Activated T-helper 2 cell treated with anti-CD3 and anti-CD28 coated beads, Interferon-gamma antibody, Interleukin-2, Interleukin-4, amounts not matched to agents 10 μg/mL and 5 μg/mL and 100 μg/mL, durations not matched to agents 14 hours and 24 hours and 36 hours (primary cell): ENCODE measurements at regions of chr11 and their contacts with region 1.

Region 1: DNA sequence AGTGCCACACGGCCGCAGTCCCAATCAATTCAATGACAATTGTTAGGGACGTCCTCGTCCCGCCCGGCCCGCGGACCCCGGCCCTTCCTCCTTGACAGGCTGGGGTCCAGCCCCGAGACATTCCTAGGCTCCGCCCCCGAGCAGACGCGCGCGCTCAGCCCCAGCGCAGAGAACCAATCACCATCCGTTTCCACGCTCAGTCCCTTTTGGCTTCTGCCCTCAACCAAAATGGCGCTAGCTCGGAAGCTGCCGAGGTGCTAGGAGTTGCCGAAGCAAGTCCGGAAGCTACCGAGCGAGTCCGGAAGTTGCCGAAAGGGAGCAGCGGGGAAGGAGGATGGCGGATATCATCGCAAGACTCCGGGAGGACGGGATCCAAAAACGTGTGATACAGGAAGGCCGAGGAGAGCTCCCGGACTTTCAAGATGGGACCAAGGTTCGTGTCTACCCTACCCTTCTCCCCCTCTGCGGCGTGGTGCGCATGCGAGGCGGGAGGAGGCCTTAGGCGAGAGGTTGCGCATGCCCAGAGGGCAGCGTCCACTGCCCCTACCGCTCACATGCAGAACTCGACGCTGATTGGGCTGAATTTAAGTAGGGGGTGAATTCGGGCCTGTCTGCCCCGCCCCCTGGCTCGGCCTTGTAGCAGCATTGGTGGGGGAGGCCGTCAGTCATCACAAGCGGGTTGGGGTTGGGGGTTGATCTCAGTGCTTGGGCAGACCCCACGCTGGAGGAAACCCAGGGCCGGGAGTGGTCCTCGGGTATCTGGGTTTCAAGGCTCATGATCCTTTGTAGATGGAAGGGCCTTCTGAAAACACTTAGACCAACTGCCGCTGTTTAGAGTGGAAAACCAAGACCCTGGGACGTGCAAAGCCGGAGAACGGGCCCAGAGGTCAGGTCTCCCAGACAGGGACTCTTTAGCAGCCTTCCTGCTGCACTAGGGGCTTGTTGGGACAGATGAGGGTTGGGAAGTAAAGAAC is at the start of gene AIP:
- DNase-seq: peak; percentile 98
- H3K4me3 Mint-ChIP-seq: peak within 1 kb of the TSS; percentile 83
- H3K27ac Mint-ChIP-seq: peak within 1 kb of the TSS; percentile 99
- H3K4me1 Mint-ChIP-seq: peaks cover 42% of the 10 kb centered on the region
- H3K27me3 Mint-ChIP-seq: no peaks in the 10 kb centered on the region
- total RNA-seq, gene AIP: 190 and 191 TPM in 2 replicates

Region 2: DNA sequence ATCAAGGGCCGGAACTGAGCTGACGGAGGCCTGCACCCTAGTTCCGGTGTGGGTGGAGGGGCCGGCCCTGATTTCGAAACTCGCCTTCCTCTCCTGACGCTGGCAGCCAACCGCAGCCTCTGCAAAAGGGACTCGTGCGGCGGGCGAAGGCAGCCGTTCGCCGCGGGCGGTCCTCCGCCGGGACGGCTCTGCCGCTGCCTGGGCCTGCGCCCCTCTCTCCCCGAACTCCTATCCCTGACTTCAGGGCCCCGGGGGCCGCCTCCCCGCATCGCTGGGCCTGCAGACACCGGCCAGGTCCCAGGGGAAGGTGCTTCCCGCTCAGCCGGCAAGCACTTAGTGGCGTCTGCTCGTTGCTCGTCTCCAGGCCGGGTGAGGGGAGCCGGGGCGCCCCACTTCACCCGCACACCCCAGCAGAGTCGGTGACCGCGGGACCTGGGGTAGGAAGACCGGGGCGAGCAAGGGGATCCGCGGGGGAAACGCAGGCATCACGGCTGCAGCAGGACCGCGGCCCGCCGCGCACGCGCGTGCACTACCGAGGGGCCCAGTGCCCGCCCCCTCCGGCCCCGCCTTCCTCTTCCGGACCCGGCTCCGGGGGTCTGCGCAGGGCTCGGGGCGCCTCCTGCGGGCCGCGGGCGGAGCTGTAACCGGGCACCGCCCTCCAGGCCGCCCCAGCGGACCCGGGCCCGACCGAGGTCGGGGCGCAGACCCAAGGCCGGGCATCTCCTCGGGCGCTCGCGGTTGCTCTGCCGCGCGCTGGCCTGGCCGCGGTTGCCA is 194.5 kb before region 1 on chr11:
- intact Hi-C with region 1: loop called (anchors 5 kb)
- DNase-seq: peak; percentile 89
- H3K4me3 Mint-ChIP-seq: peak overlapping the region; percentile 81
- H3K27ac Mint-ChIP-seq: peak overlapping the region; percentile 96
- H3K4me1 Mint-ChIP-seq: peaks cover 44% of the 10 kb centered on the region
- H3K27me3 Mint-ChIP-seq: no peaks in the 10 kb centered on the region

Region 3: DNA sequence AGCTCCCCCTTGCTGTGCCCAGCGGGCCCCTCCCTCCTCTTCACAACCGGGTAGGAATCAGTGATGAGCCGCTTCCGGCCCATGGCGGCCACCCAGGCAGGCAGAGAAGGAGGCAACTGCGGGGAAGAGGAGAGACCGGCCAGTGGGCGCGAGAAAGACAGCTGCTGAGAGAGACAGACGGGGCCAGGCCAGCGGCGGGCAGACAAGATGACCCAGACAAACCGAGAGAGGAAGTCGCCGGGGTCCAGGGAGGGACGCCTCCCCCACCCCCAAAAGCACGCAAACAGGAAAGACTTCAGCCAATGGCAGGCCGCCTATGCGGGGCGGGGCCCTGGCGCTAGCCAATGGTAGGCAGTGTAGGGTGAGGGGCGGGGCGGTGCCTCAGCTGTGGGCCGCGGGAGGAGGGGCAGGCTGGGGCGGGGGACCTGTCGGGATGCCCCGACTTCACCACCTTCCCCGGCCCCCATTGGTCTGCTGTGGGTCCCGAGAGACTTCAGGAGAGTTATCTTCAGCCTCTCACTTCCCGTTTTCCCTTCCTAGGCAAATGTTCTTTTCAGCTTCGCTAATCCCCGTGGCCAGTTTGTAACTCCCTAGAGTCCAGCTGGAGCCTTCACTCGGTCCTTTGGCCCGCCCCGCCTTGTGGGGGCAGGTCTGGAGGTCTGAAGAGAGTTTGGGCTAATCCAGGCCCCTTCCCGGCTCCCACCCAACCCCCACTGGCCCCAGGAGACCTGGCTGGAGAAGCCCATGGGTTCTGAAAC is 129.6 kb before region 1 on chr11 and contains the start of gene POLD4:
- intact Hi-C with region 1: loop called (anchors 5 kb)
- DNase-seq: peak; percentile 94
- H3K4me3 Mint-ChIP-seq: peak within 1 kb of the TSS; percentile 96
- H3K27ac Mint-ChIP-seq: peak within 1 kb of the TSS; percentile 100
- H3K4me1 Mint-ChIP-seq: peaks cover 35% of the 10 kb centered on the region
- H3K27me3 Mint-ChIP-seq: peaks cover 8% of the 10 kb centered on the region
- total RNA-seq, gene POLD4: 41.1 and 50.1 TPM in 2 replicates

Region 4: DNA sequence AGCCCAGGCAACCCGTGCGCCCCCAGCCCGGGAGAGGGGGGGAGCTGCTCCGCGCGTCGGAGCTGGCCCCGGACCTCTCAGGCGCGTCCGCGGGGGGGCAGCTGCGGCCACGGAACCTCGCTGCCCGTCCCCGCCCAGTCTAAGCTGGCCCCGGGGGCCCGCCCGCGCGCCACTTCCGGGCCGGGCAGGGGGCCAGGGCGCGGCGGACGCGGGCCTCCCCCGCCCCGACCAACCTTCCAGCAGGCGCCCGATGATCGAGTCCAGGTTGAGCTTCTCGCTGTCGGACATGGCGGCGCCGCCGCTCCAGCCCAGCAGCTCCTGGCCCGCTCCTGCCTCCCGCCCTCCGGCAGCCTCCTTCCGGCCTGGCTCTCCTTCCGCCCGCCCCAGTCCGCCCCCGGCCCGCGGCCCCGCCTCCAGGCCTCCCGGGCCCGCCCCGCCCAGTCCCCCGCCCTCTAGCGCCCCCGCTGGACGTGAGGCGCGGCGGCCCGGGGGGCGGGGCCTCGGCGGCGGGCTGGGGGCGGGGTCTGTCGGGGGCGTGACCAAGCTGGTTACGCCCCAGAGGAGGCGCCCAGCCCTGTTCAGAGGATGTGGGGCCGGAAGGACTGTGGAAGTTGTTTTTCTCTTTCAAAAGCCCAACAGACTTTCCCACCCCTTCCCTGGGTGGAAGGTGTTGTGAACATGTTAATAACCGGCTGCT is 81.5 kb before region 1 on chr11 and contains the start of gene PPP1CA:
- intact Hi-C with region 1: loop called (anchors 2 kb)
- DNase-seq: peak; percentile 86
- H3K4me3 Mint-ChIP-seq: peak within 1 kb of the TSS; percentile 97
- H3K27ac Mint-ChIP-seq: peak within 1 kb of the TSS; percentile 83
- H3K4me1 Mint-ChIP-seq: peaks cover 40% of the 10 kb centered on the region
- H3K27me3 Mint-ChIP-seq: no peaks in the 10 kb centered on the region
- total RNA-seq, gene PPP1CA: 250 and 262 TPM in 2 replicates

Region 5: GRCh38 chr11:67420646-67421420 is 62.3 kb before region 1 on chr11:
- intact Hi-C with region 1: no loop called
- DNase-seq: peak; percentile 94
- H3K4me3 Mint-ChIP-seq: peak overlapping the region; percentile 67
- H3K27ac Mint-ChIP-seq: no peak overlapping the region
- H3K4me1 Mint-ChIP-seq: peaks cover 24% of the 10 kb centered on the region
- H3K27me3 Mint-ChIP-seq: peaks cover 10% of the 10 kb centered on the region

Region 6: GRCh38 chr11:67439321-67439883 is 43.7 kb before region 1 on chr11:
- intact Hi-C with region 1: loop called (anchors 2 kb)
- DNase-seq: no peak
- H3K4me3 Mint-ChIP-seq: peak overlapping the region; percentile 94
- H3K27ac Mint-ChIP-seq: peak overlapping the region; percentile 95
- H3K4me1 Mint-ChIP-seq: peaks cover 37% of the 10 kb centered on the region
- H3K27me3 Mint-ChIP-seq: no peaks in the 10 kb centered on the region

Region 7: GRCh38 chr11:67468835-67469811 is 14.0 kb before region 1 on chr11 and contains the start of gene TMEM134:
- intact Hi-C with region 1: loop called (anchors 1 kb)
- DNase-seq: peak; percentile 86
- H3K4me3 Mint-ChIP-seq: peak within 1 kb of the TSS; percentile 92
- H3K27ac Mint-ChIP-seq: peak within 1 kb of the TSS; percentile 68
- H3K4me1 Mint-ChIP-seq: peaks cover 25% of the 10 kb centered on the region
- H3K27me3 Mint-ChIP-seq: no peaks in the 10 kb centered on the region
- total RNA-seq, gene TMEM134: 58.5 and 62.0 TPM in 2 replicates

Region 8: DNA sequence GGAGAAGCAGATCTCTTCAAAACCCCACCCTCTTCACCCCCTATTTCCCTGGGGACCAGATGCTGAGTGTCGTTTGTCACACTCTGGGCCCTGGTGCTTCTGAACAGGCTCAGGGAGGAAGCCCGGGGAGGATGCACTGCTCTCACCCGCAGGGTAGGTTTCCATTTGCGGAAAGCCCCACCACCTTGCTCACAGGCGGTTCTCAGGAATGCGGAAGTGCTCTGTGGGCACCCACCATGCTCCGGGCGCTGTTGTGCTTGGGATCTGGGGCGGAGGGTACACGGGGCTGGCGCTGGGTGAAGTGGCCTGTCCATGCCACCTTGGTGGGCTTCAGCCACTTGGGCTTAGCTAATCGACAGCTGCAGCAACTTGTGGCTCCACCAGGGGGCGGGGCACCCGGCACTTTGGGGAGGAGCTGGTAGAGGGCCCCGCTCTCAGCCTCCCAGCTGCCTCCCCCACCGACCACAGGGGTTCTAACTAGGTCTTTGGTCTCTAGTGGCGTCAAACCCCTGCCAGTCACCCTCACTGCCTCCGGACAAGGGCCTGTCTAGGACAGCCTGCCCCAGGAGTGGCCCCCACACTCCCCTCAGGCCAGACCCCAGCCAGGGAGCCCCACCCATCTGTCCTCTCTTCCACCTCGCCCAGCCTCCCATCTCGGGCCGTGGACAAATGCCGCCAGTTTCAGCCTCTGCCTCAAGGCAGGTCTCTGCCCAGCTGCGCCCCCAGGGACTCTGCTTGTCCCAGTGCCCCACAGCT is 131.0 kb after region 1 on chr11:
- intact Hi-C with region 1: loop called (anchors 10 kb)
- DNase-seq: peak; percentile 81
- H3K4me3 Mint-ChIP-seq: peak overlapping the region; percentile 74
- H3K27ac Mint-ChIP-seq: peak overlapping the region; percentile 98
- H3K4me1 Mint-ChIP-seq: peaks cover 22% of the 10 kb centered on the region
- H3K27me3 Mint-ChIP-seq: no peaks in the 10 kb centered on the region